PC-9 (cell line): ENCODE measurements at regions of chr14 and their contacts with region 1.

Region 1: DNA sequence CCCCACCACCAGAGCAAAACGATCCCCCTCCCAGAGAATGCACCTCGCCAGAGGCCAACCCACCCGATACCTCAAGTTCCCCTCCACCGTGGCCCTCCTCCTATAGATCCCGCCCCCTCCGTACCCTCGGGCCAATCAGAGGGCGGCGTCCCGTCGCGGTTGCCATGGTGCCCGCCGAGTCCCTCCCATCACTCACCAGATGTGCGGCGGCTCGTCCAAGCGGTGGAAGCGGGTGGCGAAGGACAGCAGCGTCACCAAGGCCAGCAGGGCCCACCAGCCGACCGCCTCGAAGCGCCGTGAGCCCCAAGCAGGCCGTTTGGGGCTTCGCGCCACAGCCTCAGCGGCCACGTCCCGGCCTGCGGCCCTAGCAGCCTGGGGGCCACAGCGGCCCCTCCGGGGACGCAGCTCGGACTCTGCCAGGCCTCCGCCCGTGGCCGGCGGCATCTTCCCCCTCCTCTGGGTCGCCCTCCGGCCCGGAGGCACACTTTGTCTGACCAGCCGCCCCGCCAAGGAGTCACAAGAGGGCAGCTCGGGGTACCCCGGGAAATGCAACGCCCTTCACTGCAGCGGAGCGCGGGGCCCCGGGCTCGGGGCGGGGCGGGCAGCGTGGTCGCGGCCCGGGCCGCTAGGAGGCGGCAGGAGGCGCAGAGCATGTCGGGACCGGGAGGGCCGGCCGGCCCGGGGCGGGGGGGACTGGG is at the start of gene POMT2:
- DNase-seq: peak; percentile 89 to 100
- H3K4me3 ChIP-seq: peak within 1 kb of the TSS; percentile 83
- H3K27ac ChIP-seq: peak within 1 kb of the TSS; percentile 72
- H3K4me1 ChIP-seq: peaks cover 18% of the 10 kb centered on the region
- H3K27me3 ChIP-seq: no peaks in the 10 kb centered on the region
- CTCF ChIP-seq: peak; percentile 76
- total RNA-seq, gene POMT2: 96.5 and 109 TPM in 2 replicates

Region 2: GRCh38 chr14:76904740-76905438 is 415.5 kb before region 1 on chr14:
- CTCF ChIA-PET with region 1: no interaction called
- POLR2A ChIA-PET with region 1: interaction called, 13 read pairs
- intact Hi-C with region 1: no loop called
- DNase-seq: peak; percentile 98 to 100
- H3K4me3 ChIP-seq: peak overlapping the region; percentile 9; the same call in 1 of the 2 replicates
- H3K27ac ChIP-seq: peak overlapping the region; percentile 80
- H3K4me1 ChIP-seq: peaks cover 34% of the 10 kb centered on the region
- H3K27me3 ChIP-seq: no peaks in the 10 kb centered on the region
- CTCF ChIP-seq: no peak

Region 3: DNA sequence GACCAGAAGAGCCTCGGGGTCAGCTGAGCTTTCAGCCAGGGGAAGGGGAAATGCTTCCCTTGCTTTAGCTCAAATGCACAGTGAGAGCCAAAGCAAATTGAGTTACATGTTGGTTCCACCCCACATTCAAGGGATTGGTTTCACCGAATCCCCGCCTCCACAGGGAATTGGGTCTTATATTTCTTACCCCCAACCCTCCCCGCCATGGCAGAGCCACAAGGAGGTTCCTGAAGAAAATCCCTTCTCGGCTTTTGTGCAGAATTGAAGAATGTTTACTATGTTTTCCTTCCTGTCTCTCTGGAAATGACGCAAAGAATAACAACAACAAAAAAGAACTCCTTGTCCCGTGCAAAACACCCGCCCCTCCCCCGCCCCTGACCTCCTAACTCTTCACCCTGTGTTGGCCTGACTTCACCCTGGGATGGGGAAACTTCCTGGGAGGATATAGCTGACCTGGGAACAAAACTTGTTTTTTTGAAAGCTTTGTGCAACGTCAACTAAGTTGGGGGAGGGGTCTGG is 244.2 kb before region 1 on chr14:
- CTCF ChIA-PET with region 1: interaction called, 11 read pairs
- POLR2A ChIA-PET with region 1: no interaction called
- intact Hi-C with region 1: no loop called
- DNase-seq: no peak
- H3K4me3 ChIP-seq: no peak overlapping the region
- H3K27ac ChIP-seq: no peak overlapping the region
- H3K4me1 ChIP-seq: peaks cover 35% of the 10 kb centered on the region
- H3K27me3 ChIP-seq: no peaks in the 10 kb centered on the region
- CTCF ChIP-seq: no peak

Region 4: GRCh38 chr14:77301103-77301502 is 19.3 kb before region 1 on chr14:
- CTCF ChIA-PET with region 1: interaction called, 51 read pairs
- POLR2A ChIA-PET with region 1: interaction called, 13 read pairs
- intact Hi-C with region 1: loop called (anchors 2 kb)
- DNase-seq: peak in 1 of 2 experiments; percentile 49
- H3K4me3 ChIP-seq: no peak overlapping the region
- H3K27ac ChIP-seq: no peak overlapping the region
- H3K4me1 ChIP-seq: peaks cover 32% of the 10 kb centered on the region
- H3K27me3 ChIP-seq: no peaks in the 10 kb centered on the region
- CTCF ChIP-seq: peak; percentile 86

Region 5: GRCh38 chr14:77400219-77400618 is 79.8 kb after region 1 on chr14:
- CTCF ChIA-PET with region 1: no interaction called
- POLR2A ChIA-PET with region 1: no interaction called
- intact Hi-C with region 1: no loop called
- DNase-seq: no peak
- H3K4me3 ChIP-seq: no peak overlapping the region
- H3K27ac ChIP-seq: no peak overlapping the region
- H3K4me1 ChIP-seq: no peaks in the 10 kb centered on the region
- H3K27me3 ChIP-seq: no peaks in the 10 kb centered on the region
- CTCF ChIP-seq: no peak

Region 6: GRCh38 chr14:77542421-77543239 is 222.2 kb after region 1 on chr14:
- CTCF ChIA-PET with region 1: interaction called, 24 read pairs
- POLR2A ChIA-PET with region 1: no interaction called
- intact Hi-C with region 1: no loop called
- DNase-seq: no peak
- H3K4me3 ChIP-seq: no peak overlapping the region
- H3K27ac ChIP-seq: no peak overlapping the region
- H3K4me1 ChIP-seq: no peaks in the 10 kb centered on the region
- H3K27me3 ChIP-seq: no peaks in the 10 kb centered on the region
- CTCF ChIP-seq: no peak

Region 7: DNA sequence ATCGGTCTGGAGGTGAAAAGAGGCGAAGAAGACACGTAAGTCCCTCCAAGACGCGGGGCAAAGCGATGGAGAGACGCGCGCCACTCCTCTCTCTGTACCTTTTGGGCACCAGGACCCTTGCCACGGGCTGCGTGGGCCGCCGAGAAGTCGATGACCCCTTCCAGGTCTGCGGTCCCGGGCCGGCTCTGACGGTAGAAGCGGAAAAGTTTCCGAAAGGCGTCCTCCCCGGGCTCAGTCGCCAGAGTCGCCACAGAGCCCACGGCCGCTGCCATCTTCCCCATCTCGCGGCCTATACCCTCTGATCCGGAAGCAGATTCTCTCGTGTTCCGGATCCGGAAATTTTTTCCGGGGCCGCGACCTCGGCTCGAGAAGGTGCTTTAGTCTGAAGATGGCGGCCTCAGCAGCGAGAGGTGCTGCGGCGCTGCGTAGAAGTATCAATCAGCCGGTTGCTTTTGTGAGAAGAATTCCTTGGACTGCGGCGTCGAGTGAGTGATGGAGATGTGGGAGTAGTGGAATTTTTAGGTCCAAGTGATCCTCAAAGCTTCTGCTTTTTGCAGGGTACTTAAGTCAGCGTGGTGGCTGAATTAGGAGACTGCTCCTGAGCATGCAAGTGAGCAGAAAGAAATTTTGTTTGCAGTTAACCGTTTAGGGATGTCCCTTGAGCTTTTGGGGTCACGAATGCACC is 387.5 kb after region 1 on chr14 and contains the starts of genes ALKBH1 and SLIRP:
- CTCF ChIA-PET with region 1: no interaction called
- POLR2A ChIA-PET with region 1: no interaction called
- intact Hi-C with region 1: loop called (anchors 2 kb)
- DNase-seq: peak; percentile 88 to 92
- H3K4me3 ChIP-seq: peak within 1 kb of the TSS; percentile 74
- H3K27ac ChIP-seq: peak within 1 kb of the TSS; percentile 27
- H3K4me1 ChIP-seq: peaks cover 25% of the 10 kb centered on the region
- H3K27me3 ChIP-seq: no peaks in the 10 kb centered on the region
- CTCF ChIP-seq: no peak; the same call in 1 of the 2 replicates
- total RNA-seq, gene ALKBH1: 22.7 and 25.0 TPM in 2 replicates
- total RNA-seq, gene SLIRP: 298 and 375 TPM in 2 replicates